ENCODE measurements at regions of chr6 and their contacts with region 1.

Region 1: DNA sequence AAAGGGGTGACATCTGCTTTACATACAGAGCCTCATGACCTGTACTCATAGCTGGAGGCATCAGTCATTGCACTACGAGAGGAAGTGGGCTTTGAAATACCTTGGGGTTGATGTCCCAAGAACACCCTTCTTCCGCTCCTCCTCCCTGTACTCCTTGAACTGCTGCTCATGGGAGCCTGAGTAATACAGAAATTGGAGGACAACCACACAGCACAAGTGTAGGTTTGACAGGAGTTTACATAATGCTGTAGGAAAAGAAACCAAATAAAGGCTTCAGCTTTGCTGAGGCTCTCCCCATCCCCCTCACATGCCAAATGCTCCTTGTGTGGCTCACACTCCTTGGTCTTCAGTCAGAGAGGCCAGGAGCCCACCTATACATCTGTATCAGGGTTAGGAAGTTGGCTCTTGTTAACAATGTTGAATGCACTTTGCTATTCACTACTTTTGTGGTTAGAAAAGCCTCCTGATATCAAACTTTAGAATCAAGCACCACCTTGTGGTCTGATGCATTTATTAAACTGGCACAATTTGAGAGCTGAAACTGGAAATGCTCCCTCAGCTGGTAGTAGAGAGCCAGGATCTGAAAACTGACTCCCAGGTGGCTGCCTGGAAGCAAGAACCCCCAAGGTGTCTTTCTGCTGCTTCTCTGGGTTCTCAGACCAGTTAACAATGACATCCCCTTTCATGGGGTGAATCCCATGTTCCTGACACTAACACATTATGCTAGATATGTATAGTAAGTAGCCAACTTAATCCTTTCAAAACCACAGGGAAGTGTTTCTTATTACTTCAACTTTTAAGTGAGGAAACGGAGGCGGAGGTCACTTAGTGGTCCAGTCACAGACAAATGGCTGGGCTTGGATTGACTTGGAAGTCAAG is 56.2 kb upstream of the EDN1 start:
- DNase-seq: peak; percentile 66
- ATAC-seq: peak; percentile 89
- H3K4me3 ChIP-seq: no peak overlapping the region
- H3K27ac ChIP-seq: peak overlapping the region; percentile 65
- H3K4me1 ChIP-seq: peaks cover 22% of the 10 kb centered on the region
- H3K27me3 ChIP-seq: no peaks in the 10 kb centered on the region
- CTCF ChIP-seq: peak; percentile 46 to 64 (median 54); a peak in 5 of 6 replicates
- EP300 ChIP-seq: no peak
- POLR2A ChIP-seq: no peak
- RAD21 ChIP-seq: peak; percentile 73

Region 2: GRCh38 chr6:11659757-11660156 is 574.2 kb before region 1 on chr6:
- CTCF ChIA-PET with region 1: interaction called, 50 read pairs
- POLR2A ChIA-PET with region 1: no interaction called
- RAD21 ChIA-PET with region 1: interaction called, 35 read pairs
- SMC1A ChIA-PET with region 1: interaction called, 61 read pairs
- in situ Hi-C with region 1: no loop called
- intact Hi-C with region 1: loop called (anchors 1 kb)
- DNase-seq: no peak
- ATAC-seq: peak; percentile 48
- H3K4me3 ChIP-seq: no peak overlapping the region
- H3K27ac ChIP-seq: peak overlapping the region; percentile 25; the same call in 1 of the 2 replicates
- H3K4me1 ChIP-seq: peaks cover 20% of the 10 kb centered on the region
- H3K27me3 ChIP-seq: no peaks in the 10 kb centered on the region
- CTCF ChIP-seq: no peak
- EP300 ChIP-seq: no peak
- POLR2A ChIP-seq: no peak
- RAD21 ChIP-seq: no peak

Region 3: DNA sequence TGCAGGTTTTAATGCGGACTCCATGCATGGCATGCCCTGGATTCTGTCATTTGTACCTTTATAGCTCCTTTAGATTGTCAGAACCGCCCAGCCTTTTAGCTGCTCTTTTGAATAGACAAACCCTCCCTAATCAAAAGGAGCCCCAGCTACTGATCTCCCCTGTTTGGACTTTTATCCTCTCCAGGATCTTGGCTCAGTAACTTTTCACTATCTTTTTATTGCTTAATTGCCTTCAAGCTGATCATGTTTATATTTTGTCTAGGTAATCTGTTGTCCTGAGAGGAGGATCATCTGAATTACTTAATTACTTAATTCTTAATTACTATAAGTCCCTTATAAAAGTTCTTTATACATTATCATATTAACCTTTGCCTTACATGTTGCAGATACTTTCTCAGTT is 128.7 kb before region 1 on chr6:
- CTCF ChIA-PET with region 1: no interaction called
- POLR2A ChIA-PET with region 1: no interaction called
- RAD21 ChIA-PET with region 1: no interaction called
- SMC1A ChIA-PET with region 1: no interaction called
- in situ Hi-C with region 1: no loop called
- intact Hi-C with region 1: no loop called
- DNase-seq: no peak
- ATAC-seq: no peak
- H3K4me3 ChIP-seq: no peak overlapping the region
- H3K27ac ChIP-seq: no peak overlapping the region
- H3K4me1 ChIP-seq: peaks cover 13% of the 10 kb centered on the region
- H3K27me3 ChIP-seq: no peaks in the 10 kb centered on the region
- CTCF ChIP-seq: no peak
- EP300 ChIP-seq: no peak
- POLR2A ChIP-seq: no peak
- RAD21 ChIP-seq: no peak